Activated CD4-positive, alpha-beta memory T cell treated with anti-CD3 and anti-CD28 coated beads, Interleukin-2, amount 10 ng/mL, durations not matched to agents 7 days and 5 days (primary cell): ENCODE measurements at regions of chr10 and their contacts with region 1.

Region 1: GRCh38 chr10:73495884-73496674 is at the start of gene PPP3CB:
- DNase-seq: peak; percentile 93
- H3K4me3 Mint-ChIP-seq: peak within 1 kb of the TSS; percentile 93
- H3K27ac Mint-ChIP-seq: peak within 1 kb of the TSS; percentile 96
- H3K4me1 Mint-ChIP-seq: peaks cover 52% of the 10 kb centered on the region
- H3K27me3 Mint-ChIP-seq: no peaks in the 10 kb centered on the region
- total RNA-seq, gene PPP3CB: 53.4 to 55.4 TPM

Region 2: DNA sequence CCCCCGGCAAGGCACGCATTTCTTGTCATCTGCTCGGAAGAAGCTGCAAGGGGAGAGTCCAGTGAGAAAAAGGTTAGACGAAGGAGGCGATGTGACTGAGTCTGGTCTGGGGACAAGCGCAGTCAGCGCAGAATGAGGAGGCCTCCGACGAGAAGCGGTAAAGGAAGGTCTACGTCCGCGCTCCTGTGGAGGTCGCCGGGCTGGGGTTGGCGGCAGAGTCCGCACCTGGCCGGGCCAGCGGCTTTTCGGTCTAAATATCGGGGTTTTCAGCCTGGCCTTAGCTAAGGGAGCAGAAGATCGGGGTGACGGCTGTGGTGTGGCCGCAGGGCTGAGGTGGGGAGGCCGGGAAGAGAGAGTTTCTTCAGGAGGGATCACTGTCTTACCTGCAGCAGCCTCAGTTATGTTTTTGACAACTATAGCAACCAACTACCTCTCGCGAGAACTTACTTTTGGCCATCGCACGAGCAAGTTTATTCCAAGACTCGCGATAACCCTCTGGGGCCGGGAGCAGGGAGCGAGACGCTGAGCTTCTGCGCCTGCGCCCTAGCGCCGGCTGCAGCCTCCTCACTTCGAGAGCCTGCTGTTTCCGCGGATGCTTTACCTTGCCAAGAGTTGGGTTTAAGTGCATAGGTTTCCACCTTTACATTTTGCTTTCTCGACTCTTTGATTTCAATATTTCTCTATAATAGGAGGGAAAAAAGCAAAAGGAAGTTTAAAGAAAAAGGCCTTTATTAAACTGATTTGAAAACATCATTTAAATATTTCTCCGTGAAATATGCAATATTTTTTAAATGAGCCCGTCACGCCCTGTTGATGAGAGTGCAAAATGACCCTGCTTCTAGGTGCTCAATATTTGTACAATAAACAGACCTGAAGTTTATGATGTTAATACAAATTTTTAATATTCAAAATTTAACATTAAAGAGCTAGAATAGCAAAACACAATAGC is 137.5 kb before region 1 on chr10 and contains the start of gene CFAP70:
- CTCF ChIA-PET with region 1: no interaction called
- POLR2A ChIA-PET with region 1: interaction called, 18 read pairs
- DNase-seq: peak; percentile 95
- H3K4me3 Mint-ChIP-seq: peak within 1 kb of the TSS; percentile 93
- H3K27ac Mint-ChIP-seq: peak within 1 kb of the TSS; percentile 71
- H3K4me1 Mint-ChIP-seq: peaks cover 21% of the 10 kb centered on the region
- H3K27me3 Mint-ChIP-seq: peaks cover 11% of the 10 kb centered on the region
- total RNA-seq, gene CFAP70: 0.28 to 0.70 TPM

Region 3: GRCh38 chr10:73480158-73480557 is 15.9 kb before region 1 on chr10:
- CTCF ChIA-PET with region 1: interaction called, 7 read pairs
- POLR2A ChIA-PET with region 1: interaction called, 60 read pairs
- DNase-seq: no peak
- H3K4me3 Mint-ChIP-seq: peak overlapping the region; percentile 9
- H3K27ac Mint-ChIP-seq: peak overlapping the region; percentile 66
- H3K4me1 Mint-ChIP-seq: peaks cover 40% of the 10 kb centered on the region
- H3K27me3 Mint-ChIP-seq: no peaks in the 10 kb centered on the region

Region 4: DNA sequence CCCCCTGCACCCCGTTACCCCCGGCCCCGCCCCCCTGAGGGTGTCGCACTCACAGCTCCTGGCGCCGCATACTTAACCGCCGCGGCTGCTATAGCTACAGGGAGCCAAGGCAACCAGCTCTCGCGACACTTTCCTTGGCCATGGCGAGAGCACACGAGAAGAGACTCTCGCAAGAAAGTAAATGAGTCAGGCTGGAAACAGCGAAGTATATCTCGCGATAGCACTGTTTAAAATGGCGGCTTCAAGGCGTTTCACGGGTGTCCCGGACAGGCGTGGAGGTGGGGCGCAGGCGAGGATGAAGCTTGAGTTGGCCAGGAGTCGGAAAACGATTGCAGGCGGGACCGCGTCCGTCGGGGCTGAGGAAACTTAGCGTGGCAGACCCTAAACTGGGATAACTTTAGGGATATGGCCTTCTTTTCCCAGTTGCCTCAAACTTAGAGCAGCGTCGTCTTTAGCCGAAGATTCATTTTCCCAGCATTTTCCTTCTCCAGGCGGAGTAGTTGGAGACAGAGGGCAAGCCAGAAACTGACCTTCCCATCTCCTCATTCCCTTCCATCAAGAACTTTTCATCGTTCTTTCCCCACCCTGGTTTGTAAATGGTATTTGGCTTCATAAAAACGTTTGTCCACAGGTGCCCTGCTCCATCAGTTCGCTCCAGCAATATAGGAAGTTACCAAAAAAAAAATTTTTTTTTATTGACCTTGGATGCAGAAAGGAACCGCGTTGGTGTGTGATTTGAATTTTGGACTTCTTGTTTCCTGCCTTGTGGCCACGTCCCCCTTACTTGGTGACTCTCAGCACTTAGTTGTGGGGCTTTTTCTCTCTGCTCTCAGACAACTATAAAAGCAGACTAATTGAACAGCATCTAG is 130.0 kb after region 1 on chr10:
- CTCF ChIA-PET with region 1: no interaction called
- POLR2A ChIA-PET with region 1: interaction called, 18 read pairs
- DNase-seq: peak; percentile 96
- H3K4me3 Mint-ChIP-seq: peak overlapping the region; percentile 98
- H3K27ac Mint-ChIP-seq: peak overlapping the region; percentile 91
- H3K4me1 Mint-ChIP-seq: peaks cover 27% of the 10 kb centered on the region
- H3K27me3 Mint-ChIP-seq: no peaks in the 10 kb centered on the region

Region 5: DNA sequence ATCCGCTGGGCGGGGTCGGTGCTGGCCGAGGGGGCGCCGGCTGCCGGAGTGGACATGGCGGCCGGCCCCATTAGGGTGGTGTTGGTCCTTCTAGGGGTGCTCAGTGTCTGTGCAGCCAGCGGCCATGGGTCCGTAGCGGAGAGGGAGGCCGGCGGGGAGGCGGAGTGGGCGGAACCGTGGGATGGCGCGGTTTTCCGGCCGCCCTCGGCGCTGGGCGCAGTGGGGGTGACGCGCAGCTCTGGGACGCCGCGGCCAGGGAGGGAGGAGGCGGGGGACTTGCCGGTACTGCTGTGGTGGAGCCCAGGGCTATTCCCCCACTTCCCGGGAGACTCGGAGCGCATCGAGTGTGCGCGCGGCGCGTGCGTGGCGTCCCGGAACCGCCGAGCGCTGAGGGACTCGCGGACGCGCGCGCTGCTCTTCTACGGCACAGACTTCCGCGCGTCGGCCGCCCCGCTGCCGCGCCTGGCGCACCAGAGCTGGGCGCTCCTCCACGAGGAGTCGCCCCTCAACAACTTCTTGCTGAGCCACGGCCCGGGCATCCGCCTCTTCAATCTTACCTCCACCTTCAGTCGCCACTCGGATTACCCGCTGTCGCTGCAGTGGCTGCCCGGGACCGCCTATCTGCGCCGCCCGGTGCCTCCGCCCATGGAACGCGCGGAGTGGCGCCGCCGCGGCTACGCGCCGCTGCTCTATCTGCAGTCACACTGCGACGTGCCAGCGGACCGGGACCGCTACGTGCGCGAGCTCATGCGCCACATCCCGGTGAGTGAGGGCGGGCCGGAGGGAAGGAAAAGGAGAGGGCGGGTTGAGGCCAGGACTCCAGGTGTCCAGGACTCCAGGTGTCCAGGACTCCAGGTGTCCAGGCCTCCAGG is 276.4 kb after region 1 on chr10:
- CTCF ChIA-PET with region 1: interaction called, 3 read pairs
- POLR2A ChIA-PET with region 1: interaction called, 11 read pairs
- DNase-seq: peak; percentile 86
- H3K4me3 Mint-ChIP-seq: peak overlapping the region; percentile 85
- H3K27ac Mint-ChIP-seq: peak overlapping the region; percentile 93
- H3K4me1 Mint-ChIP-seq: peaks cover 67% of the 10 kb centered on the region
- H3K27me3 Mint-ChIP-seq: no peaks in the 10 kb centered on the region